Stomach (tissue), 19 donors: ENCODE measurements at regions of chr3 and their contacts with region 1.

Region 1: DNA sequence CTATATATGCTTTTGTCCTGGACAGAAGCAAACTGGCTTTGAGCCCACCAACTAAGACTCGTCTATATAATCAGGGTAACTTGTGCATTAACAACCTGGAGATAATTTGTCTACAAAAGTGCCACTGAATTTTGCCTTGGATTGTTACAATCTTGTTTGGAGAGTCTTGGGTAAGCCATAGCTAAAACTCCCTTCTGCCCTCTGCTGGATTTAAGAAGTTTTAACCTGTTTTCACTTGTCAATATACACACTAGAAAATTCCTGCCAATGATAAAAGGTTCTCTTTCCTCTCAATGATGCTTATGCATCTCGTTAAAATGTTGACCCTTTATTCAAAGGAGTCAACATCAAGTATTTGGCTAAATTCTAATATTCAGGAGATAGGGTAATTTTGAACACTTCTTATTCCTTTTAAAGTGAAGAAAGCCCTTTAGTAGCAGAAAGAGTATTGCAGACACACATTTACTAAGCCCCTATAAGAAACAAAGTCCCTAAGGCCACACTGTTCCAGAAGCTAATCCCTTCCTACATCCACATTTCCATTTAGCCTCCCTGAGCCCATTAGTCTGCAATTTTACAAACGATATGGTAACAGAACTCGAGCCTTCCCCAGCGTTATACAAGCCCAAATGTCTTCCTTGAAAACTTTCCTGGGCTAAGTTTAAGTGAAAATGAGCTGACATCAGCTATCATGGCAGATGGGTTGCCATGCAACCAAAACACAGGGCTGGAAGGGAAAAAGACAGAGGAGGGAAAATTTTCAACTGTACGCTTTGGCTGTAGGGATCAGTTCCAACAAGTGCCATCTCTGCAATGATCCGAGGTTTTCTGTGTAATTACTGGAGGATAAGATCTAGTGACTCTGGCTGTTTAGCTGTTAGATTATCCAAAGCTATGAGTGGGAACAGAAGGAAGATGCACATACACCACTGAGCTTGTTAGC is 75.9 kb upstream of the FGF12 start:
- DNase-seq: peak in 1 of 2 donors; percentile 70
- H3K4me3 ChIP-seq: no peak overlapping the region
- H3K27ac ChIP-seq: no peak overlapping the region
- H3K4me1 ChIP-seq: peaks cover 0 to 20% (median 5%) of the 10 kb centered on the region in 4 donors
- H3K27me3 ChIP-seq: no peaks in the 10 kb centered on the region
- CTCF ChIP-seq: peak in 4 of 7 experiments; percentile 36 to 61 (median 41)
- EP300 ChIP-seq: no peak
- POLR2A ChIP-seq: no peak

Region 2: GRCh38 chr3:192566706-192567290 is 236.4 kb before region 1 on chr3:
- intact Hi-C with region 1: loop called (anchors 5 kb)
- DNase-seq: peak; percentile 84 to 93
- H3K4me3 ChIP-seq: no peak overlapping the region
- H3K27ac ChIP-seq: no peak overlapping the region
- H3K4me1 ChIP-seq: peaks cover 0 to 19% (median 3%) of the 10 kb centered on the region in 4 donors
- H3K27me3 ChIP-seq: no peaks in the 10 kb centered on the region
- CTCF ChIP-seq: peak in 5 of 7 experiments; percentile 49 to 74 (median 67)
- EP300 ChIP-seq: no peak
- POLR2A ChIP-seq: no peak

Region 3: GRCh38 chr3:192947421-192947820 is 144.2 kb after region 1 on chr3:
- intact Hi-C with region 1: no loop called
- DNase-seq: no peak
- H3K4me3 ChIP-seq: no peak overlapping the region
- H3K27ac ChIP-seq: no peak overlapping the region
- H3K4me1 ChIP-seq: no peaks in the 10 kb centered on the region
- H3K27me3 ChIP-seq: no peaks in the 10 kb centered on the region
- CTCF ChIP-seq: no peak
- EP300 ChIP-seq: no peak
- POLR2A ChIP-seq: no peak